H1 (cell line): ENCODE measurements at regions of chr3 and their contacts with region 1.

Region 1: GRCh38 chr3:142828703-142829305 is 60.1 kb downstream of the PCOLCE2 start:
- DNase-seq: peak; percentile 47 to 92
- H3K4me3 ChIP-seq: no peak overlapping the region
- H3K27ac ChIP-seq: no peak overlapping the region
- H3K4me1 ChIP-seq: no peaks in the 10 kb centered on the region
- H3K27me3 ChIP-seq: no peaks in the 10 kb centered on the region
- CTCF ChIP-seq: peak; percentile 95 to 99 (median 97)
- EP300 ChIP-seq: no peak
- POLR2A ChIP-seq: no peak
- RAD21 ChIP-seq: peak; percentile 97

Region 2: GRCh38 chr3:142808103-142808917 is 20.5 kb before region 1 on chr3:
- CTCF ChIA-PET with region 1: interaction called, 21 read pairs
- POLR2A ChIA-PET with region 1: no interaction called
- DNase-seq: no peak
- H3K4me3 ChIP-seq: no peak overlapping the region
- H3K27ac ChIP-seq: no peak overlapping the region
- H3K4me1 ChIP-seq: no peaks in the 10 kb centered on the region
- H3K27me3 ChIP-seq: no peaks in the 10 kb centered on the region
- CTCF ChIP-seq: no peak
- EP300 ChIP-seq: no peak
- POLR2A ChIP-seq: no peak
- RAD21 ChIP-seq: no peak

Region 3: DNA sequence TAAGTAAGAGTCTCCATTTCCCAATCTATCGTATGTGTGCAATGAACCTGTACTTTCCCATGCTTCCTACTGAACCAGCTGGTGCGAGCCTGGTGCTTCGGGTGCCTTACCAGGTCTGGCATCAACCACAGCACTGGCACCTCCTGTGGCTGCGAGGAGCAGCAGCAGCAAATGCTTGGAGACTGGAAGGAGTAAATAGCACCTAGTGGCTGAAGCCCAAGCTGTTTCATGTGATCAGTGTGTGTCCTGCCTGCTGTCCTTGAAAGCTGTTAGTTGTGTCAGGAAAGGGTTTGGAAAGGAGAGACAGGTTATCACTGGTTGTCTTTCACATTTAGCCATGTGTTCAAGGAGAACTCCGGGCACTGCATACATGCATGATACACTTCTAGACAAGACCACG is 28.3 kb after region 1 on chr3:
- CTCF ChIA-PET with region 1: interaction called, 56 read pairs
- POLR2A ChIA-PET with region 1: no interaction called
- DNase-seq: no peak
- H3K4me3 ChIP-seq: no peak overlapping the region
- H3K27ac ChIP-seq: no peak overlapping the region
- H3K4me1 ChIP-seq: peaks cover 8 to 27% (median 20%) of the 10 kb centered on the region in 4 experiments
- H3K27me3 ChIP-seq: no peaks in the 10 kb centered on the region
- CTCF ChIP-seq: peak; percentile 74 to 97 (median 84)
- EP300 ChIP-seq: no peak
- POLR2A ChIP-seq: no peak
- RAD21 ChIP-seq: peak; percentile 44 to 57

Region 4: GRCh38 chr3:142896201-142896755 is 67.5 kb after region 1 on chr3:
- CTCF ChIA-PET with region 1: interaction called, 26 read pairs
- POLR2A ChIA-PET with region 1: no interaction called
- DNase-seq: no peak
- H3K4me3 ChIP-seq: no peak overlapping the region
- H3K27ac ChIP-seq: no peak overlapping the region
- H3K4me1 ChIP-seq: no peaks in the 10 kb centered on the region
- H3K27me3 ChIP-seq: no peaks in the 10 kb centered on the region
- CTCF ChIP-seq: no peak
- EP300 ChIP-seq: no peak
- POLR2A ChIP-seq: no peak
- RAD21 ChIP-seq: no peak

Region 5: GRCh38 chr3:142929109-142929508 is 100.3 kb after region 1 on chr3:
- CTCF ChIA-PET with region 1: interaction called, 26 read pairs
- POLR2A ChIA-PET with region 1: no interaction called
- DNase-seq: peak in 1 of 2 experiments; percentile 70
- H3K4me3 ChIP-seq: no peak overlapping the region
- H3K27ac ChIP-seq: no peak overlapping the region
- H3K4me1 ChIP-seq: no peaks in the 10 kb centered on the region
- H3K27me3 ChIP-seq: no peaks in the 10 kb centered on the region
- CTCF ChIP-seq: peak; percentile 74 to 78 (median 77)
- EP300 ChIP-seq: no peak
- POLR2A ChIP-seq: no peak
- RAD21 ChIP-seq: peak; percentile 57 to 72

Region 6: GRCh38 chr3:142993958-142994442 is 165.2 kb after region 1 on chr3:
- CTCF ChIA-PET with region 1: interaction called, 122 read pairs
- POLR2A ChIA-PET with region 1: no interaction called
- DNase-seq: peak in 1 of 2 experiments; percentile 67
- H3K4me3 ChIP-seq: no peak overlapping the region
- H3K27ac ChIP-seq: no peak overlapping the region
- H3K4me1 ChIP-seq: no peaks in the 10 kb centered on the region
- H3K27me3 ChIP-seq: no peaks in the 10 kb centered on the region
- CTCF ChIP-seq: peak; percentile 10 to 77 (median 77)
- EP300 ChIP-seq: no peak
- POLR2A ChIP-seq: no peak
- RAD21 ChIP-seq: peak; percentile 81 to 89